ENCODE measurements at regions of chr20 and their contacts with region 1.

Region 1: GRCh38 chr20:36835453-36836198 is 40.3 kb upstream of the TLDC2 start:
- DNase-seq: peak; percentile 93
- H3K4me3 ChIP-seq: peak overlapping the region; percentile 60
- H3K27ac ChIP-seq: peak overlapping the region; percentile 78
- H3K4me1 ChIP-seq: peaks cover 34% of the 10 kb centered on the region
- CTCF ChIP-seq: no peak

Region 2: DNA sequence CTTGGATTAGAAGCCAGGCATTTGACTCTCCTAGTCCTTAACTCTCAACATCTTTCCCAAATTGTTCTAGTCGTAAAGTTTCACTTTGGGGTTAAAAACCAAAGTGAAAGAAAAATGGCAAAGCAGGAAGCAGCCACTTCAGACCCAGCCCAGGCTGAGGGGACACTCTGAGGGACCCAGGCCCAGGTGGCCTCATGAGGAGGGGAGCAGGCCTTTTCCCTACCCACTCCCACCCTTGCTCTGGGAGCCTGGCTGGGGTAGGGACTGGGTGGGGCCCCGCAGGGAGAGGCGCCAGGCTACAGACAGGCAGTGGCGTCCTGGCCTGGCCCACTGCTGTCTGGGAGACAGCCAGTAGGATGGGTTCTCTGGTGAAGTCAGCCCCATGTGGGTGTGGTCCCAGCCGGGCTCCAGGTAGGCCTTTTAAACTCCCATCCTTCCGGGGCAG is 363.0 kb before region 1 on chr20:
- CTCF ChIA-PET with region 1: no interaction called
- POLR2A ChIA-PET with region 1: no interaction called
- intact Hi-C with region 1: loop called (anchors 5 kb)
- DNase-seq: no peak
- H3K4me3 ChIP-seq: peak overlapping the region; percentile 35
- H3K27ac ChIP-seq: peak overlapping the region; percentile 63
- H3K4me1 ChIP-seq: peaks cover 64% of the 10 kb centered on the region
- CTCF ChIP-seq: no peak

Region 3: DNA sequence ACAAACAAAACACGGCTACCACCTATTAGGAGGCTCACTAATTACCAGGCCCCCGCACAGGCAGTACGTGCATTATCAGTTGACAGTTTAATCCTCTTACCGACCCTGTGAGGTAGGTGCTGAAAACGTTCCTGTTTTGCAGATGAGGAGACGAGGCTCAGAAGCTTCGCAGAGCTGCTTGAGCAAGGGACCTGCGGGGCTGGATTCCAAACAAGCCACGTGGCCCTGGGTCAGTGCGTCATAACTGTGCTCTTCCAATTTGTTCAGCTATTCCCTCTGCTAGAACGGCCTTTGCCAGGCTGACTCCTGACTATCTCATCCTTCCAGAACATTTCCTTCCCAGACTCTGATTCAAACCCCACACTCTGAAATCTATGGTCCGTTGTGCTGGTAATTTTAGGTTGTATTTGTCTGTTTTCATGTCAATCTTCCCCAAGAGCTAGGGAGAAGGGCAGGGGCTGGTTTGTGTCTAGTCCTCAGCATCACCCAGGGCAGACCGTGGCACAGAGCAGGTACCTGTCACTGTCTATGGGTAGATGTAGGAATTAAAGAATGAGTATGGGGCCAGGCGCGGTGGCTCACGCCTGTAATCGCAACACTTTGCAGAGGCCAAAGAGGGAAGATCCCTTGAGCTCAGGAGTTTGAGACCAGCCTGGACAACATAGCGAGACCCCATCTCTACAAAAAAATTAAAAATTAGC is 11.5 kb after region 1 on chr20:
- CTCF ChIA-PET with region 1: interaction called, 22 read pairs
- POLR2A ChIA-PET with region 1: interaction called, 87 read pairs
- intact Hi-C with region 1: no loop called
- DNase-seq: no peak
- H3K4me3 ChIP-seq: no peak overlapping the region
- H3K27ac ChIP-seq: peak overlapping the region; percentile 93
- H3K4me1 ChIP-seq: peaks cover 89% of the 10 kb centered on the region
- CTCF ChIP-seq: no peak

Region 4: GRCh38 chr20:36856691-36857635 is 21.3 kb after region 1 on chr20:
- CTCF ChIA-PET with region 1: interaction called, 3 read pairs
- POLR2A ChIA-PET with region 1: interaction called, 20 read pairs
- intact Hi-C with region 1: no loop called
- DNase-seq: peak; percentile 38
- H3K4me3 ChIP-seq: no peak overlapping the region
- H3K27ac ChIP-seq: no peak overlapping the region
- H3K4me1 ChIP-seq: peaks cover 43% of the 10 kb centered on the region
- CTCF ChIP-seq: no peak

Region 5: GRCh38 chr20:36861875-36862801 is 26.5 kb after region 1 on chr20:
- CTCF ChIA-PET with region 1: interaction called, 16 read pairs
- POLR2A ChIA-PET with region 1: interaction called, 20 read pairs
- intact Hi-C with region 1: no loop called
- DNase-seq: no peak
- H3K4me3 ChIP-seq: peak overlapping the region; percentile 28
- H3K27ac ChIP-seq: no peak overlapping the region
- H3K4me1 ChIP-seq: peaks cover 51% of the 10 kb centered on the region
- CTCF ChIP-seq: no peak